Activated naive CD4-positive, alpha-beta T cell treated with anti-CD3 and anti-CD28 coated beads for 36 hours (primary cell): ENCODE measurements at regions of chr4 and their contacts with region 1.

Region 1: GRCh38 chr4:32161382-32161781 is 1441.2 kb downstream of the PCDH7 start:
- DNase-seq: no peak
- H3K4me3 Mint-ChIP-seq: no peak overlapping the region
- H3K27ac Mint-ChIP-seq: no peak overlapping the region
- H3K4me1 Mint-ChIP-seq: no peaks in the 10 kb centered on the region
- H3K27me3 Mint-ChIP-seq: no peaks in the 10 kb centered on the region

Region 2: DNA sequence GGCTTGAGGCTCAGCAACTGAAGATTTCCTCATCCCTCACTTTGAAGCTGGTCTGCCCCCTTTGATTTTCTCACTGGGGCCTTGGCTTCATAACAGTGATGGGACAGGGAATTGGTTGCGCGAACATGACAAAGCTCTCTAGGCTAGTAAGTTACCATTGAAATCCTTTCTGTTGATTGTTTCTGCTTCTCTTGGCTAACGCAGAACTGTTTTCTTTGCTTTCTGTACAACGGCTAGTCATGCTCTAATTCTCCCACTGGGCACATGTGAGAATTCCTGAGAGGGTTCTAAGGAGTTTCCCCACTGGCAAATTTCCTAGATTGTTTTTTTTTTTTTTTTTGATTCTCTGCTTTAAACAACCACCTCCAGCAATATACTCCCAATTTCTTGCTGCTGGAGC is 702.6 kb before region 1 on chr4:
- CTCF ChIA-PET with region 1: no interaction called
- intact Hi-C with region 1: no loop called
- DNase-seq: no peak
- H3K4me3 Mint-ChIP-seq: no peak overlapping the region
- H3K27ac Mint-ChIP-seq: no peak overlapping the region
- H3K4me1 Mint-ChIP-seq: no peaks in the 10 kb centered on the region
- H3K27me3 Mint-ChIP-seq: no peaks in the 10 kb centered on the region

Region 3: DNA sequence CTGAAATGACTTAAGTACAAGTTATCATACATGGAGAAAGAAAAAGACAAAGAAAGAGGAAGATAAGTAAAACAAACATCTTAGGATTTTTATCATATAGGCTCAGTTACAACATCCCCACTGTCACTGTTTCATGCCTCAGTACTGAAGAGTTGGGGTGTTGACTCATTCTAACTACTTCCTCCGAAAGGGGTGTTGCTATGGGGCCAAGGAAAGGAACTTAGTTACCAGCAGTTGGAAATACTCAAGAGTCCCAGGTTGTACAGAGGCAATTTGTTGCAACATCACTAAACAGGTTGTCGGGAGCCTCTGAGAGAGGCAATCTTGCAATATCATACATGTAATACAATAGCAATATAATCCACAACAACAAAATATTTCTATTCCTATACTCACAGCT is 176.5 kb before region 1 on chr4:
- CTCF ChIA-PET with region 1: no interaction called
- intact Hi-C with region 1: no loop called
- DNase-seq: no peak
- H3K4me3 Mint-ChIP-seq: no peak overlapping the region
- H3K27ac Mint-ChIP-seq: no peak overlapping the region
- H3K4me1 Mint-ChIP-seq: no peaks in the 10 kb centered on the region
- H3K27me3 Mint-ChIP-seq: no peaks in the 10 kb centered on the region

Region 4: GRCh38 chr4:32226204-32226603 is 64.8 kb after region 1 on chr4:
- CTCF ChIA-PET with region 1: no interaction called
- intact Hi-C with region 1: loop called (anchors 10 kb)
- DNase-seq: no peak
- H3K4me3 Mint-ChIP-seq: no peak overlapping the region
- H3K27ac Mint-ChIP-seq: no peak overlapping the region
- H3K4me1 Mint-ChIP-seq: no peaks in the 10 kb centered on the region
- H3K27me3 Mint-ChIP-seq: no peaks in the 10 kb centered on the region